ENCODE measurements at regions of chr3 and their contacts with region 1.

Region 1: DNA sequence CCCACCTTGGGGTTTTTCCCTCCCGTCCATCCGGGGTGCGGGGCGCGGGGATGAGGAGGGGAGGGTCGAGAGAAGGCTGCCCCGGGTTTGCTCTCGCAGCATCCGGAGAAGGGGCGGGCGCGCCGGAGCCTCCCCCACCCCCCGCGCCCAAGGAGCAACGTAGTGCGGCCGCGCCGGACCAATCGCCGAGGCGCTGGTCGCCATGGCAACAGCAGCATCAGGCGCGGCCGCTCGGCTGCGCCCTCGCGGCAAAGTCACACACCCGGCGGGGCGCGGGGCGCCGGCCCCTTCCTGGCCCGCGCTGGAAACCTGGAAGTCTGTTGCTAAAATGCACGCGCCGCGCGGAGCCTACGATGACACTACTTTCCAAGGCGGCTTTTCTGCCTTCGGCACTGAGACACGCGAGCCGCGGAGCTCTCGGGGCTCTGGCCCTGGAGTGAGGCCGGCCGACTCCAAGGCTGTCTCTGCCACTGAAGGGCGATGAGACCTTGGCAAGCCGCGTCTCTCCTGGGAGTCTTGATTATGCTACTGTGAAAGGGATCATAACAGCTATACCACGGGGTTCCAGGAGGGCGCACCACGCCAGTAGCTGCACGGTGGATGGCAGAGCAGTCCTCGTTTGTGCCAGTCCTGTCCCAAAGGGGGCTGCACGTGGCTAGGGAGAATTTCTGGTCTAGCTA is at the start of gene IQSEC1:
- DNase-seq: peak; percentile 94
- ATAC-seq: peak; percentile 71
- H3K4me3 ChIP-seq: peak within 1 kb of the TSS; percentile 21 to 65 (median 53)
- H3K4me3 Mint-ChIP-seq: peak within 1 kb of the TSS; percentile 91
- H3K27ac ChIP-seq: peak within 1 kb of the TSS; percentile 79 to 90
- H3K27ac Mint-ChIP-seq: peak within 1 kb of the TSS; percentile 93
- H3K4me1 ChIP-seq: peaks cover 62 to 67% of the 10 kb centered on the region in 2 donors
- H3K4me1 Mint-ChIP-seq: peaks cover 68% of the 10 kb centered on the region
- H3K27me3 ChIP-seq: no peaks in the 10 kb centered on the region
- H3K27me3 Mint-ChIP-seq: no peaks in the 10 kb centered on the region
- CTCF ChIP-seq: no peak
- total RNA-seq, gene IQSEC1: 222 and 235 TPM in 2 replicates

Region 2: GRCh38 chr3:12954891-12955650 is 118.4 kb before region 1 on chr3:
- CTCF ChIA-PET with region 1: interaction called, 3 read pairs
- POLR2A ChIA-PET with region 1: interaction called, 4 read pairs
- intact Hi-C with region 1: loop called (anchors 1 kb)
- DNase-seq: peak; percentile 87
- ATAC-seq: peak; percentile 96
- H3K4me3 ChIP-seq: peak overlapping the region in 3 of 5 experiments; percentile 20 to 40 (median 32)
- H3K4me3 Mint-ChIP-seq: peak overlapping the region; percentile 74
- H3K27ac ChIP-seq: peak overlapping the region; percentile 70 to 81
- H3K27ac Mint-ChIP-seq: peak overlapping the region; percentile 94
- H3K4me1 ChIP-seq: peaks cover 60 to 90% of the 10 kb centered on the region in 2 donors
- H3K4me1 Mint-ChIP-seq: peaks cover 80% of the 10 kb centered on the region
- H3K27me3 ChIP-seq: no peaks in the 10 kb centered on the region
- H3K27me3 Mint-ChIP-seq: no peaks in the 10 kb centered on the region
- CTCF ChIP-seq: peak; percentile 35

Region 3: DNA sequence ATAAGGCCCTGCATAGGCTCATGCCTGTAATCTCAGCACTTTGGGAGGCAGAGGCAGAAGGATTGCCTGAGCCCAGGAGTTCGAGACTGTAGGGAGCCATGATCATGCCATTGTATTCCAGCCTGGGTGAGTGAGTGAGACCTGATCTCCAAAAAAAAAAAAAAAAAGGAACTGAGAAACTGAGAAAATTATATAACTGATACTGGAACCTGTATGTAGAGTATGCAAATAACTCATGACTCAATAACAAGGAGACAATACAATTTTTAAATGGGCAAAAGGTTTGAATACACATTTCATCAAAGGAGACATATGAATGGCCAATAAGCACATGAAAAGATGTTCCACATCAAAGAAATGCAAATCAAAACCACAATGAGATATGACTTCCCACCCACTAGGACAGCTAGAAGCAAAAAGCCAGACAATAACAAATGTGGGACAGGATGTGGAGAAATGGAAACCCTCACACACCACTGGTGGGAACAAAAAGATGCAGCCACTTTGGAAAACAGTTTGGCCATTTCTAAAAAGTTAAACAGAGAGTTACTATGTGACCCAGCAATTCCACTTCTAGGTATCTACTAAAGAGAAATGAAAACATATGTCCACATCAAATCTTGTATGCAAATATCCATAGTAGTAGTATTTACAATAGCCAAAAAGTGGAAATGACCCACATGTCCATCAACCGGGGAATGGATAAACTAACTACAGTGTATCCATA is 70.9 kb before region 1 on chr3:
- CTCF ChIA-PET with region 1: interaction called, 4 read pairs
- POLR2A ChIA-PET with region 1: no interaction called
- intact Hi-C with region 1: loop called (anchors 1 kb)
- DNase-seq: peak; percentile 84
- ATAC-seq: peak; percentile 65
- H3K4me3 ChIP-seq: peak overlapping the region in 2 of 5 experiments; percentile 5 to 35
- H3K4me3 Mint-ChIP-seq: peak overlapping the region; percentile 73
- H3K27ac ChIP-seq: peak overlapping the region; percentile 77 to 97
- H3K27ac Mint-ChIP-seq: peak overlapping the region; percentile 93
- H3K4me1 ChIP-seq: peaks cover 90 to 95% of the 10 kb centered on the region in 2 donors
- H3K4me1 Mint-ChIP-seq: peaks cover 93% of the 10 kb centered on the region
- H3K27me3 ChIP-seq: no peaks in the 10 kb centered on the region
- H3K27me3 Mint-ChIP-seq: no peaks in the 10 kb centered on the region
- CTCF ChIP-seq: no peak

Region 4: GRCh38 chr3:13045904-13046568 is 27.4 kb before region 1 on chr3:
- CTCF ChIA-PET with region 1: interaction called, 5 read pairs
- POLR2A ChIA-PET with region 1: interaction called, 9 read pairs
- intact Hi-C with region 1: loop called (anchors 1 kb)
- DNase-seq: peak; percentile 90
- ATAC-seq: peak; percentile 92
- H3K4me3 ChIP-seq: peak overlapping the region in 2 of 5 experiments; percentile 26 to 42
- H3K4me3 Mint-ChIP-seq: peak overlapping the region; percentile 90
- H3K27ac ChIP-seq: peak overlapping the region; percentile 89
- H3K27ac Mint-ChIP-seq: peak overlapping the region; percentile 87
- H3K4me1 ChIP-seq: peaks cover 63 to 71% of the 10 kb centered on the region in 2 donors
- H3K4me1 Mint-ChIP-seq: peaks cover 70% of the 10 kb centered on the region
- H3K27me3 ChIP-seq: no peaks in the 10 kb centered on the region
- H3K27me3 Mint-ChIP-seq: no peaks in the 10 kb centered on the region
- CTCF ChIP-seq: no peak

Region 5: DNA sequence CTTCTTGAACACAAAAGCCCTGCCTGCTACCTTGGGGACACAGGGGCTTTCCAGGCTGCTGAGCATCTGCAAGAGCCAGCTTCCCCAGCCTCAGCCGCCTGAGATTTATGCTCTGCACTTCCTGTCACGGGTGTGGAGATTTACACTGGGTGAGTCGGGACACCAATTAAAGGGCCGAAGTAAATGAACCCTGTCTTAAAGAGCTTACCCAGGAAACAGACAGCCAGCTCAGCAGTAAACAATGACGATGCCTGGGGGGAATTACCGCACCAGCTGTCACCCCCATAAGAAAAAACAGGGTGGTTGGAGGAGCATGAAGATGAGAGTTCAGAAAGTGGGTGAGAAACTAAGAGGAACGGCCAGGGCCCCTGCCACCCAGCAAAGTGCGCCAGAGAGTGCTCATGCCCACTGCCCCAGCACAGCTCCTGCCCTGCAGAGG is 37.2 kb after region 1 on chr3:
- CTCF ChIA-PET with region 1: no interaction called
- POLR2A ChIA-PET with region 1: no interaction called
- intact Hi-C with region 1: loop called (anchors 1 kb)
- DNase-seq: peak; percentile 98
- ATAC-seq: peak; percentile 86
- H3K4me3 ChIP-seq: peak overlapping the region in 4 of 5 experiments; percentile 13 to 24 (median 16)
- H3K4me3 Mint-ChIP-seq: peak overlapping the region; percentile 64
- H3K27ac ChIP-seq: peak overlapping the region; percentile 98 to 99
- H3K27ac Mint-ChIP-seq: peak overlapping the region; percentile 96
- H3K4me1 ChIP-seq: peaks cover 59 to 62% of the 10 kb centered on the region in 2 donors
- H3K4me1 Mint-ChIP-seq: peaks cover 58% of the 10 kb centered on the region
- H3K27me3 ChIP-seq: peaks cover 0 to under 1% (median 0%) of the 10 kb centered on the region in 4 experiments
- H3K27me3 Mint-ChIP-seq: no peaks in the 10 kb centered on the region
- CTCF ChIP-seq: no peak

Measured in B cell (primary cell).